ENCODE measurements at regions of chr7 and their contacts with region 1.

Region 1: GRCh38 chr7:992709-993607 is 10.0 kb downstream of the CYP2W1 start:
- DNase-seq: peak; percentile 94
- ATAC-seq: peak; percentile 96
- H3K4me3 ChIP-seq: no peak overlapping the region
- H3K4me3 Mint-ChIP-seq: peak overlapping the region; percentile 47
- H3K27ac ChIP-seq: no peak overlapping the region
- H3K27ac Mint-ChIP-seq: peak overlapping the region; percentile 90
- H3K4me1 ChIP-seq: peaks cover 0 to 9% of the 10 kb centered on the region in 2 donors
- H3K4me1 Mint-ChIP-seq: peaks cover 13% of the 10 kb centered on the region
- H3K27me3 ChIP-seq: peaks cover 0 to 22% (median 2%) of the 10 kb centered on the region in 4 experiments
- H3K27me3 Mint-ChIP-seq: no peaks in the 10 kb centered on the region
- CTCF ChIP-seq: peak; percentile 100

Region 2: DNA sequence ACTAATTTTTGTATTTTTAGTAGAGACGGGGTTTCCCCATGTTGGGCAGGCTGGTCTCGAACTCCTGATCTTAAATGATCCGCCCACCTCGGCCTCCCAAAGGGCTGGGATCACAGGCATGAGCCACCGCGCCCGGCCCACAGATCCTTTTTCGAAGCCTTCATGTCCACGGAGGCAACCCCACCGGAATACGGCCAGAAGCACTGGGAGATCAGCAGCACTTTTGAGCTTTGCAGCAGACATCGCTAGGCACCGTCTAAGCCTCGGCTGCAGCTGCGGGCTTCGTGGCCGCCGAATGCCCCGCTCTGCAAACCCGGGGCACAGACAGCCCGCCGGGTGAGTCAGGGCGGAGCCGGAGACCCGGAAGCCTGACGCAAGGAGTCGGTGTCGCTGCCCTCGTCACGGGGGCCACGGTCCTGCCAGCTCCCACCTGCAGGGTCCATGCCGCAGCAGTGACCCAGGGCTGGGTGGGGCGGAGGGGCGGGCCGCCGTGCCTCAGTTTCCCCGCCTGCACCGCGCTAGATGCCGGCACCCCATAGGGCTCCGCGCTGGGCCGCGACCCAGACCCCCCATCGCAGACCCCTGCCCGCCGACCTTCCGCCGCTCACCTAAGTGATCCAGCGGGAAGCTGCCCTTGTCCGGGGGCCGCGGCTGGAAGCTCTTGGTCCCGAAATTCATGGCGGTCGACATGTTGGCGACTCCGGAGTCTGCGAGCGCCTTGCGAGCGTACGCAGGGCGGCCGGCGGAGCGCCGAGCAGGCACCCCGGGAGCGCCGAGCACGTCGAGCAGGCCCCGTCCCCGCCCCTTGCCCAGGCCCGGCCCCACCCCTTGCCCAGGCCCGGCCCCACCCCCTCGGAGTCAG is 17.9 kb before region 1 on chr7 and contains the start of gene COX19:
- CTCF ChIA-PET with region 1: interaction called, 15 read pairs
- POLR2A ChIA-PET with region 1: interaction called, 12 read pairs
- intact Hi-C with region 1: no loop called
- DNase-seq: peak; percentile 91
- ATAC-seq: peak; percentile 86
- H3K4me3 ChIP-seq: peak within 1 kb of the TSS; percentile 66 to 99 (median 91)
- H3K4me3 Mint-ChIP-seq: peak within 1 kb of the TSS; percentile 94
- H3K27ac ChIP-seq: peak within 1 kb of the TSS; percentile 93 to 95
- H3K27ac Mint-ChIP-seq: peak within 1 kb of the TSS; percentile 92
- H3K4me1 ChIP-seq: peaks cover 16 to 22% of the 10 kb centered on the region in 2 donors
- H3K4me1 Mint-ChIP-seq: peaks cover 24% of the 10 kb centered on the region
- H3K27me3 ChIP-seq: peaks cover 0 to 3% (median 0%) of the 10 kb centered on the region in 4 experiments
- H3K27me3 Mint-ChIP-seq: no peaks in the 10 kb centered on the region
- CTCF ChIP-seq: no peak
- total RNA-seq, gene COX19: 38.3 and 44.6 TPM in 2 replicates

Region 3: DNA sequence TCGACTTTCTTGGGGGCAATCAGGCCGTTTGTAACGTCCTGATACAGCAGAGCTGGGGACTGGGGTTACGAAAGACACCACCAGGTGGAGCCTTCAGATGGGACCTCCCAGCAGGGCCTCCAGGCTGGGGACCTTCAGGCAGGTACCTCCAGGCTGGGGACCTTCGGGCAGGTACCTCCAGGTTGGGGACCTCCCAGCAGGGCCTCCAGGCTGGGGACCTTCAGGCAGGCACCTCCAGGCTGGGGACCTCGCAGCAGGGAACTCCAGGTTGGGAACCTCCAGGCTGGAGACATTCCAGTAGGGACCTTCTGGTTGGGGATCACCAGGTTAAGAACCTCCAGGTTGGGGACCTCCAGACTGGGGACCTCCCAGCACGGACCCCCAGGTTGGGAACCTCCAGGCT is 27.9 kb after region 1 on chr7:
- CTCF ChIA-PET with region 1: interaction called, 36 read pairs
- POLR2A ChIA-PET with region 1: interaction called, 15 read pairs
- intact Hi-C with region 1: no loop called
- DNase-seq: peak; percentile 49
- ATAC-seq: no peak
- H3K4me3 ChIP-seq: no peak overlapping the region
- H3K4me3 Mint-ChIP-seq: no peak overlapping the region
- H3K27ac ChIP-seq: no peak overlapping the region
- H3K27ac Mint-ChIP-seq: no peak overlapping the region
- H3K4me1 ChIP-seq: peaks cover 50 to 62% of the 10 kb centered on the region in 2 donors
- H3K4me1 Mint-ChIP-seq: peaks cover 67% of the 10 kb centered on the region
- H3K27me3 ChIP-seq: peaks cover 0 to 2% (median 0%) of the 10 kb centered on the region in 4 experiments
- H3K27me3 Mint-ChIP-seq: no peaks in the 10 kb centered on the region
- CTCF ChIP-seq: peak; percentile 48

Region 4: DNA sequence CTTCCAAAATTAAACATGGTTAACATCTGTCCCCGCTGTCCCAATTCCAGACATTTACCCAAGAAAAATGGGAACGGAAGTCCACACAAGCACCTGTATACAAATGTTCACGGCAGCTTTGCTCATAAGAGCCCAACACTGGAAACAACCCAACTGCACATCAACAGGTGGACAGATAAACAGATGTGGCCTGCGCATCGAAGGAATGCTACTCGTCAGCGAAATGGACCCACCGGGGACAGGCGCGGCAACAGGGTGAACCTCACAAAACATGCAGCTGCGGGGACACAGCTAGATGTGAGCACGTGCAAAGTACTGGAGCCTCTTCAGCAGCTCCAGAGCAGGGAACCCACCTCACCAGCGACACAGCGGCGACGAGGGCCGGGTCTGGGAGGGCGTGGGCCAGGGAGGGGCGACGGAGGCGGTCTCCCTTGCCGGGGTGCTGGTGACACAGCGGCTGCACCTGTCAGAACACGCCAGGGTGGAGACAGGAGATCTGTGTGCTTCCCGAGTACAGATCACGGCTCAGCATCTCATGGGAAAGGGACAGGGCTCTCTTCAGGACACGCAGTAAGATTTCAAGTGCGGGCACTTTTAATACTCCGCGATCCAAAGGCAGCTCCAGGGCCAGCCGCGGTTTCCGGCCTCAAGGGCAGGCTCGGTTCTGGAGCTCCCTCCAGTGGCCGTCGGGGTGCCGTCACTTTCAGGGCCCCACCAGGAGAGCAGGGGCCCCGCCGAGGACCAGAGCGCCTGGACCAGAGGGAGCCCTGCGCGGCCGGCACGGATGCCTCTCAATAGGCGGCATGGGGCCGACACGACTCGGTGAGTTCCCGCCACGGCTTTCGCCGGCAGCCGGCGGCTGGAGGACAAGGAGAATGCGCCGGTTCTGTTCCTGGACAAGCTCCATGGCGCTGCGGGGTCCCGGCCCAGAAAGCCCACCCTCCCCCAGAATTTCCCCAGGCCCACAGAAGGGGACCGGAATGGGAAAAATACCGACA is 72.6 kb after region 1 on chr7:
- CTCF ChIA-PET with region 1: interaction called, 496 read pairs
- POLR2A ChIA-PET with region 1: interaction called, 47 read pairs
- intact Hi-C with region 1: loop called (anchors 1 kb)
- DNase-seq: peak; percentile 88
- ATAC-seq: peak; percentile 68
- H3K4me3 ChIP-seq: peak overlapping the region in 3 of 5 experiments; percentile 12 to 47 (median 31)
- H3K4me3 Mint-ChIP-seq: peak overlapping the region; percentile 80
- H3K27ac ChIP-seq: no peak overlapping the region
- H3K27ac Mint-ChIP-seq: peak overlapping the region; percentile 57
- H3K4me1 ChIP-seq: peaks cover 30 to 42% of the 10 kb centered on the region in 2 donors
- H3K4me1 Mint-ChIP-seq: peaks cover 44% of the 10 kb centered on the region
- H3K27me3 ChIP-seq: peaks cover 0 to 33% (median 14%) of the 10 kb centered on the region in 4 experiments
- H3K27me3 Mint-ChIP-seq: peaks cover 18% of the 10 kb centered on the region
- CTCF ChIP-seq: peak; percentile 90

Region 5: DNA sequence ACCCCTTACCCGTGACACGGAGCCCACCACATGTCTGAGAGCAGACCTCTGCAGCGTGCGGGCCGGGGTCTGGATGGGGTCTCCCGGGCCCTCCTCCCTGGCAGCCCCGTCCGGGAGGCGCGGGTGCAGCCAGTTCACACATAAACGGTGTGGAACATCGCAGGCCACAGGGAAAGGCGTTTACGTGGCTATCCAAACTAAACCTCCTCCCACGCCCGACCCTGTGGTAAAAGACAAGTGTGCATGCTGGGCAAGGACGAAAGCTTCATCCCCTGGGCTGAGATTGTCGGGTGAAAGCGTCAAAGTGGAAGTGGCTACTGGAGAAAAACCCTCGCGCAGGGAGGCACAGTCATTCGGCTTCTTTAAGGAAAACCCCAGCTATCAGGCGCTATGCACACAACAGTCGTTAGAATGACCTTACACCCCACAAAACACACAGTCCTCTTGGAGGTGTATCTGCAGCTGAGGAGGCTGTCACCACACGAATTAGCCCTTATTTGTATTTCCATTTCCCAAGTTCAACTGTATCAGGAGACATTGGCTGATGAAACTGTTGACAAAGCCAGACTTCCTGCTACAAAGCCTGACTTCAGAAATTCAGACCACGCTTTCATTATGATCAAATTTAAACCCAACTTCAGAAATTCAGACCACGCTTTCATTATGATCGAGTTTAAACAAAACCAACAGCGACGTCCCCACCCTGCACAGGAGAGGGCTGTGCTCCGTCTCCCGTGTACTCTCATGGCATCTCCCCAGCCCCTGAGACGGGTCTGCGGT is 110.2 kb after region 1 on chr7:
- CTCF ChIA-PET with region 1: interaction called, 20 read pairs
- POLR2A ChIA-PET with region 1: interaction called, 3 read pairs
- intact Hi-C with region 1: no loop called
- DNase-seq: peak; percentile 51
- ATAC-seq: peak; percentile 28
- H3K4me3 ChIP-seq: peak overlapping the region in 3 of 5 experiments; percentile 0 to 39 (median 20)
- H3K4me3 Mint-ChIP-seq: peak overlapping the region; percentile 84
- H3K27ac ChIP-seq: no peak overlapping the region
- H3K27ac Mint-ChIP-seq: no peak overlapping the region
- H3K4me1 ChIP-seq: peaks cover 7 to 31% of the 10 kb centered on the region in 2 donors
- H3K4me1 Mint-ChIP-seq: peaks cover 35% of the 10 kb centered on the region
- H3K27me3 ChIP-seq: peaks cover 0 to 6% (median 3%) of the 10 kb centered on the region in 4 experiments
- H3K27me3 Mint-ChIP-seq: peaks cover 7% of the 10 kb centered on the region
- CTCF ChIP-seq: no peak

Region 6: DNA sequence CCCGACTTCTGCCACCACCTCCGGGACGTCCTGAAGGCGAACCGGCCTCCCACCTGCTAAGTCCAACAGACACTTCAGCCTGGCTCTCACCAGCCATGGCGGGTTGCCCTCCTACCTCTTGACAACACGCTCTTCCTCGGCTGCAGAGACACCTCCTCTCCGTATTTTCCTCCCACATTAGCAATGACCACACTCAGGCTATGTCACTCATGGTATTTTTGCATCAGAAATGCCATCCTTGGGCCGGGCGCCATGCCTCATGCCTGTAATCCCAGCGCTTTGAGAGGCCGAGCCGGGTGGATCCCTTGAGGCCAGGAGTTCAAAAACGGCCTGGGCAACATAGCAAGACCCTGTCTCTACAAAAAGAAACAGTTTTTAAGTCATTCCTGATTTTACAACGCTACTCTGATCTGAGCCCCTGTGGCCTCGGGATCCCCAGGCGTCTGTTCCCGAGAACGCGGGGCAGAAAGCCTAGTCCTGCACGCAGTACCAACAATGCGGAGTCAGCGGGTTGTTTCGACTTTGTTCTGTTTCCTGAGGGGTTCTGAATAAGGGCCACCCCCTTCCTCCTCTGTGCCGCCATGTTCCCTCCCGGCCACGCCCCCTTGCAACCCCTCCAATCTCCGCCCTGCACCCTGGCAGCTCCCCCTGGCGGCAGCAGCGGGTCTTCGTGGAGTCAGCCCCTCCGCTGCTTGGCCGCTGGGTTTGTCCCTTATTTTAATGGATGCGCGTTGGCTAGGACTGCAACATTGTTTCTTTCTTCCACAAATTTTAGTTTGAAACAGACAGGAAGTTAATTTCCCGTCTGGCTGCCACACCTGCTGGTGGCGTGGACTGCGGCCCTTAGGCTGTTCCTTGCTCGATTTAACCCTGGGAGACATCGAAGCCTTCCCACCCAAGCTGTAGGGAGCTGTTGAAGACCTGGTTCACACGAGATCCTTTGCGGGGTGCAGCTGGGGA is 176.7 kb after region 1 on chr7:
- CTCF ChIA-PET with region 1: interaction called, 138 read pairs
- POLR2A ChIA-PET with region 1: no interaction called
- intact Hi-C with region 1: loop called (anchors 1 kb)
- DNase-seq: peak; percentile 85
- ATAC-seq: peak; percentile 99
- H3K4me3 ChIP-seq: peak overlapping the region in 4 of 5 experiments; percentile 49 to 57 (median 51)
- H3K4me3 Mint-ChIP-seq: peak overlapping the region; percentile 73
- H3K27ac ChIP-seq: peak overlapping the region in 1 of 2 donors; percentile 25
- H3K27ac Mint-ChIP-seq: peak overlapping the region; percentile 72
- H3K4me1 ChIP-seq: peaks cover 0 to 10% of the 10 kb centered on the region in 2 donors
- H3K4me1 Mint-ChIP-seq: peaks cover 6% of the 10 kb centered on the region
- H3K27me3 ChIP-seq: no peaks in the 10 kb centered on the region
- H3K27me3 Mint-ChIP-seq: no peaks in the 10 kb centered on the region
- CTCF ChIP-seq: peak; percentile 70

Measured in B cell (primary cell).